ENCODE measurements at regions of chr1 and their contacts with region 1.

Region 1: DNA sequence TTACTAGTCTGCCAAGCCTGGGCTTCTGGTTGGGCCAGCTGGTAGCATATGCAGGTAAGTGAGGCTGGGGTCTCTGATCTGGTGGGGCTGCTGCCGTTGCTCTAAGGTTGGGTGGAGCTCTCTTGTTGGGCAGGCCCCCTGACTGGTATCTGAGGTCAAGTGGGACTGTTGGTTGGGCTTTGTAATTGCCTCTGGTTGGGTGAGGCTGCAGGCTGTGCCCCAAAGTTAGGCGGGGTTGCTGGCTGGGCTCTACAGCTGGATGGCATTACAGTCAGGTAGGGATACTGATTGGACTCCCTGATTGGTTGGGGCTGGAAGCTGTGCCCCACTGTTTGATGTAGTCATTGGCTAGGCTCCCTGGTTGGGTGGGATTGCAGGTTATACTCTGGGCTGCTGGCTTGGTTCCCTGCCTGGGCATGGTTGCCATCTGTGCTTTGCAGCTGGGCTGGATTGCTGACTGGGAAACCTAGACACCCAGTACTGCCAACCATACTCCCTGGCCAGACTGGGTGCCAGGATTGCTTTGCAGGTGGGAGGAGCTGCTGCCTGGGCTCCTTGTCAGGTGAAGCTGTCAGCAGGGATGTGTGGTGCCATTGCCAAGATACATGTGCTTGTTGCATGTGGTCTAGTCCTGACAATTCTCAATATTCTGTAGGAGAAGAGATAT is 130.5 kb downstream of the RABGAP1L start:
- DNase-seq: no peak
- ATAC-seq: no peak
- H3K4me3 ChIP-seq: no peak overlapping the region
- H3K27ac ChIP-seq: no peak overlapping the region
- H3K4me1 ChIP-seq: no peaks in the 10 kb centered on the region
- H3K27me3 ChIP-seq: no peaks in the 10 kb centered on the region
- CTCF ChIP-seq: no peak

Region 2: GRCh38 chr1:173181791-173182190 is 1108.0 kb before region 1 on chr1:
- intact Hi-C with region 1: loop called in 1 of 2 experiments (anchors 5 kb)
- DNase-seq: no peak
- ATAC-seq: no peak
- H3K4me3 ChIP-seq: no peak overlapping the region
- H3K27ac ChIP-seq: no peak overlapping the region
- H3K4me1 ChIP-seq: no peaks in the 10 kb centered on the region
- H3K27me3 ChIP-seq: no peaks in the 10 kb centered on the region
- CTCF ChIP-seq: no peak

Measured in psoas muscle (tissue), 8 donors.